Dorsolateral prefrontal cortex (tissue), 120 donors: ENCODE measurements at regions of chr10 and their contacts with region 1.

Region 1: GRCh38 chr10:6580279-6581029 is 378 bp upstream of the PRKCQ start:
- DNase-seq: peak; percentile 16 to 91 (median 78)
- H3K4me3 ChIP-seq: peak overlapping the region; percentile 54 to 88 (median 76)
- H3K27ac ChIP-seq: peak overlapping the region; percentile 22 to 94 (median 86)
- H3K27me3 ChIP-seq: peaks cover 0 to 6% (median 0%) of the 10 kb centered on the region in 45 donors
- CTCF ChIP-seq: peak in 55 of 56 donors; percentile 6 to 86 (median 56)

Region 2: DNA sequence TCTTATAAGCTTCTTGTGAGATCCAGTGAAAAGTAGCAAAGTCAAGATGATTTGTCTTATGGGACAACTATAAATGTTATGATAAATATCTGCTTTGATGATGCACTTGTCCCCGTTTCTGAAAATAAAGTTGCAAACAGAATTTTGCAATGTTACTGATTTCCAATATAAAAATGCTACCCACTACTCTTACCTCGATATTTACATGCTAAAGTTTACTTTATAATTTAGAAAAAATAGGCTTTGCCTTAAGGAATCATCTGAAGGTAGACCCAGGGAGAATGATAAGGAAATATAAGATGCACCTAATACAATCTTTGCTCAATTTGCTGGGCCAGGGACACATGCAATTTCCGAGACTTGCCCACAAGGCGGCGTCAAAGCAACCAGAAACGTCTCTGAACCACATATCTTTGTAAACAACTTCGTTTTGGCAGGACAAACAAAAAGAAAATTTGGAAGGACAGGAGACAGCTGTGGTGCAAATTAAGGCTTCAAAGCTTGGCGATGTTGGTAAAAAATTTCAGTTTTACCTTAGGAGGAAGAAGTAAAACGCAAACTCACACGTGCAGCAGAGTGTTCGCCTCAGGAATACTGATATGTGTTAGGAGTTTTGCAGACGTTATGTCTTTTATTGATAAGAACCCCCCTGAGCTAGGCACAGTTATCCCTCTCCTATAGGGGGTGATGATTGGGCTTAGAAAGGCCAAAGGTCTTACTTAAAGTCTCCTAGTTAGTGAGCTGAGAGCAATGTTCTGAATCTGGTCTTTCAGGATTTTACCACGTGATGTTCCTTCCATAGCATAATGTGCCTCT is 134.7 kb before region 1 on chr10:
- intact Hi-C with region 1: loop called (anchors 2 to 10 kb)
- DNase-seq: peak; percentile 13 to 89 (median 69)
- H3K4me3 ChIP-seq: peak overlapping the region in 58 of 59 donors; percentile 7 to 62 (median 36)
- H3K27ac ChIP-seq: peak overlapping the region in 54 of 59 donors; percentile 10 to 93 (median 80)
- H3K27me3 ChIP-seq: no peaks in the 10 kb centered on the region
- CTCF ChIP-seq: peak; percentile 33 to 87 (median 75)

Region 3: GRCh38 chr10:6507311-6507710 is 73.1 kb before region 1 on chr10:
- intact Hi-C with region 1: loop called in 1 of 2 experiments (anchors 5 kb)
- DNase-seq: peak in 1 of 10 donors; percentile 46
- H3K4me3 ChIP-seq: peak overlapping the region in 36 of 59 donors; percentile 0 to 56 (median 22)
- H3K27ac ChIP-seq: peak overlapping the region; percentile 9 to 95 (median 85)
- H3K27me3 ChIP-seq: no peaks in the 10 kb centered on the region
- CTCF ChIP-seq: no peak

Region 4: GRCh38 chr10:6607778-6608177 is 27.3 kb after region 1 on chr10:
- intact Hi-C with region 1: loop called (anchors 1 to 2 kb)
- DNase-seq: peak in 9 of 10 donors; percentile 5 to 78 (median 62)
- H3K4me3 ChIP-seq: peak overlapping the region in 3 of 59 donors; percentile 6 to 17 (median 9)
- H3K27ac ChIP-seq: peak overlapping the region in 58 of 59 donors; percentile 56 to 97 (median 89)
- H3K27me3 ChIP-seq: peaks cover 0 to 11% (median 0%) of the 10 kb centered on the region in 45 donors
- CTCF ChIP-seq: peak in 1 of 56 donors; percentile 22

Region 5: DNA sequence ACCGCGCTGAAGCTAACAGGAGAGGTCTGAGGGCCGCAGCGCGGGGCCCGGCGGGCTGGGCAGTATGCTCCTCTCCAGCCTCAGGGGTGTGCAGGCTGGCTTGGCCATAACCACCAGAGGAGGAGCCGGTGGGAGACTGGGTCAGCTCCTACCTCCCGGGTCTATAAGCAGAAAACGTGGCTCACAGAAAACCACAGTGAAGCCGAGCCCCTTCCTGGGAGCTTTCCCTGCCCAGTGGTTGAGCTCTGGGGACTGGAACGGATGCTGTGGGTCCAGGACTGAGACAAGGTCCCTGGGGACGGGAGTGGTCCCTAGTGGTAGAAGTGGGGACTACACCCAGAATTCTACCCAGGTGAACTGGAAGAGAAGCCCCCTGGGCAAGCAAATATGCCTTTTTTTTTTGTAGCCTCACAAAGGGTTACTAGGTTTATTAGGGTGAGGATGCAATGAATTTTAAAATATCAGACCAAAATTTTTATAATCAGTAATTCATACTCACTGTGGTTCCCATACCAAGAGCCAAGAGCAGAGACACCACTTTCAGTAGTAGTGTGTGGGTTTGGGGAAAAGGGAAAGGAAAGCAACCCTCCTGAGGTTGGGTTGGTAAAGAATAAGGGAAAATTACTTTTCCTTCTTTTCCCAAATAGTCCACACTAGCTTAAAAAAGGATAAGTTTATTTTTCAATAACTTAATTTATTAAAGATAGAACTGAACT is 67.5 kb after region 1 on chr10:
- intact Hi-C with region 1: loop called (anchors 1 to 2 kb)
- DNase-seq: peak; percentile 7 to 75 (median 58)
- H3K4me3 ChIP-seq: peak overlapping the region in 3 of 59 donors; percentile 13 to 44 (median 33)
- H3K27ac ChIP-seq: peak overlapping the region in 19 of 59 donors; percentile 15 to 71 (median 53)
- H3K27me3 ChIP-seq: peaks cover 0 to 11% (median 0%) of the 10 kb centered on the region in 45 donors
- CTCF ChIP-seq: peak; percentile 35 to 92 (median 77)

Region 6: GRCh38 chr10:6667679-6668270 is 87.3 kb after region 1 on chr10:
- intact Hi-C with region 1: loop called (anchors 5 kb)
- DNase-seq: peak in 4 of 10 donors; percentile 22 to 51 (median 40)
- H3K4me3 ChIP-seq: no peak overlapping the region
- H3K27ac ChIP-seq: no peak overlapping the region
- H3K27me3 ChIP-seq: peaks cover 0 to 7% (median 0%) of the 10 kb centered on the region in 45 donors
- CTCF ChIP-seq: peak; percentile 42 to 88 (median 71)